ENCODE measurements at regions of chr6 and their contacts with region 1.

Region 1: GRCh38 chr6:161228921-161229591 is 44.8 kb downstream of the AGPAT4 start:
- DNase-seq: no peak
- H3K4me3 ChIP-seq: peak overlapping the region in 1 of 3 donors; percentile 4
- H3K27ac ChIP-seq: peak overlapping the region; percentile 55 to 77
- H3K4me1 ChIP-seq: no peaks in the 10 kb centered on the region
- H3K27me3 ChIP-seq: no peaks in the 10 kb centered on the region
- CTCF ChIP-seq: no peak
- POLR2A ChIP-seq: no peak

Region 2: GRCh38 chr6:161168281-161168891 is 60.7 kb before region 1 on chr6:
- intact Hi-C with region 1: no loop called
- DNase-seq: no peak
- H3K4me3 ChIP-seq: no peak overlapping the region
- H3K27ac ChIP-seq: no peak overlapping the region
- H3K4me1 ChIP-seq: no peaks in the 10 kb centered on the region
- H3K27me3 ChIP-seq: no peaks in the 10 kb centered on the region
- CTCF ChIP-seq: no peak
- POLR2A ChIP-seq: no peak

Region 3: GRCh38 chr6:161200610-161201370 is 28.3 kb before region 1 on chr6:
- intact Hi-C with region 1: no loop called
- DNase-seq: no peak
- H3K4me3 ChIP-seq: no peak overlapping the region
- H3K27ac ChIP-seq: no peak overlapping the region
- H3K4me1 ChIP-seq: no peaks in the 10 kb centered on the region
- H3K27me3 ChIP-seq: no peaks in the 10 kb centered on the region
- CTCF ChIP-seq: no peak
- POLR2A ChIP-seq: no peak

Region 4: GRCh38 chr6:161265971-161266370 is 36.9 kb after region 1 on chr6:
- intact Hi-C with region 1: loop called (anchors 5 kb)
- DNase-seq: no peak
- H3K4me3 ChIP-seq: no peak overlapping the region
- H3K27ac ChIP-seq: no peak overlapping the region
- H3K4me1 ChIP-seq: no peaks in the 10 kb centered on the region
- H3K27me3 ChIP-seq: no peaks in the 10 kb centered on the region
- CTCF ChIP-seq: no peak
- POLR2A ChIP-seq: no peak

Region 5: DNA sequence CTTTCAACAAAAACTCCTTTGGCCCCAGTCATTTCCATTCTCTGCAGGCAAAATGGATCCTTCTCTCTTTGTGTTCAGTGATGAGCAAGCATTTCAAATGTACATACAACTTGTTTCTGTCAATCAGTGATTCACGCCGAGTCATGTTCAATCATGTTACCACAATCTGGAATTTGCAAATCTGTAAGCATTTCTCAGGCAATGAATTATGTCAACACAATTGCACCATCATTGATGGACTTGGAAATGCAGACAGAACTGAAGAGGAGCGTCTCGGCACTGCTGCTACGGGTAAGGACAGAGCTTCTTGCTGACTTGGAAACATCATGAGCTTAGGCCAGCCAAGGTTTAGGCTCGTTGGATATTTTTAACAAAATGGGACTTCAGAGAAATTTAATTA is 177.6 kb after region 1 on chr6:
- intact Hi-C with region 1: no loop called
- DNase-seq: no peak
- H3K4me3 ChIP-seq: no peak overlapping the region
- H3K27ac ChIP-seq: no peak overlapping the region
- H3K4me1 ChIP-seq: no peaks in the 10 kb centered on the region
- H3K27me3 ChIP-seq: no peaks in the 10 kb centered on the region
- CTCF ChIP-seq: no peak
- POLR2A ChIP-seq: no peak

Region 6: DNA sequence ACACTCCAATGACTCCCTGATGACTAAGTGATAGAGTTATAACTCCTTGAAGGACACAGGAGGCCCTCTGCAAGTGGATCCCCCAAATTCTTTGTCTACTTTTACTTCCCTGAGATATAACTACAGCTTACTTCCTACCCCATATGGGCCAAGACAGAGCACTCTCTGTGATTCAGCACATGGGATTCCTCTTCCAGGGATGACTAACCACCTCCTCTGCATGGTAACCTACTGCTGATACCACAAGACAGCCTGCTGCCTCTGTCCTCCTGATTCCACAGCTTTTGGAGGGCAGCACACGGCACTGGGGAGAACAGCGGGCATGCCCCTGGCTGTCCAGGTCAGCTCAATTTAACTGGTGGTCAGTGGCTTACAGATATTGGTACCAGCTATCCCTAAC is 720.5 kb after region 1 on chr6:
- intact Hi-C with region 1: loop called (anchors 10 kb)
- DNase-seq: no peak
- H3K4me3 ChIP-seq: no peak overlapping the region
- H3K27ac ChIP-seq: no peak overlapping the region
- H3K4me1 ChIP-seq: no peaks in the 10 kb centered on the region
- H3K27me3 ChIP-seq: no peaks in the 10 kb centered on the region
- CTCF ChIP-seq: no peak
- POLR2A ChIP-seq: no peak

Measured in breast epithelium (tissue), 4 donors.